Mammary epithelial cell (primary cell): ENCODE measurements at regions of chr6 and their contacts with region 1.

Region 1: GRCh38 chr6:150395398-150396009 is 26.7 kb downstream of the IYD start:
- DNase-seq: peak; percentile 62
- H3K4me3 ChIP-seq: no peak overlapping the region
- H3K27ac ChIP-seq: no peak overlapping the region
- H3K4me1 ChIP-seq: no peaks in the 10 kb centered on the region
- H3K27me3 ChIP-seq: no peaks in the 10 kb centered on the region
- CTCF ChIP-seq: peak; percentile 65 to 81

Region 2: GRCh38 chr6:149925974-149926777 is 469.3 kb before region 1 on chr6:
- CTCF ChIA-PET with region 1: no interaction called
- dilution Hi-C with region 1: no loop called
- in situ Hi-C with region 1: loop called in 1 of 2 experiments (anchors 25 kb)
- intact Hi-C with region 1: no loop called
- DNase-seq: peak; percentile 75
- H3K4me3 ChIP-seq: peak overlapping the region; percentile 14 to 44 (median 35)
- H3K27ac ChIP-seq: no peak overlapping the region
- H3K4me1 ChIP-seq: peaks cover 18% of the 10 kb centered on the region
- H3K27me3 ChIP-seq: no peaks in the 10 kb centered on the region
- CTCF ChIP-seq: peak; percentile 91 to 97

Region 3: GRCh38 chr6:149990618-149991471 is 404.7 kb before region 1 on chr6:
- CTCF ChIA-PET with region 1: interaction called, 13 read pairs
- dilution Hi-C with region 1: no loop called
- in situ Hi-C with region 1: no loop called
- intact Hi-C with region 1: no loop called
- DNase-seq: no peak
- H3K4me3 ChIP-seq: peak overlapping the region; percentile 38 to 42 (median 41)
- H3K27ac ChIP-seq: no peak overlapping the region
- H3K4me1 ChIP-seq: peaks cover 18% of the 10 kb centered on the region
- H3K27me3 ChIP-seq: peaks cover 59% of the 10 kb centered on the region
- CTCF ChIP-seq: no peak

Region 4: DNA sequence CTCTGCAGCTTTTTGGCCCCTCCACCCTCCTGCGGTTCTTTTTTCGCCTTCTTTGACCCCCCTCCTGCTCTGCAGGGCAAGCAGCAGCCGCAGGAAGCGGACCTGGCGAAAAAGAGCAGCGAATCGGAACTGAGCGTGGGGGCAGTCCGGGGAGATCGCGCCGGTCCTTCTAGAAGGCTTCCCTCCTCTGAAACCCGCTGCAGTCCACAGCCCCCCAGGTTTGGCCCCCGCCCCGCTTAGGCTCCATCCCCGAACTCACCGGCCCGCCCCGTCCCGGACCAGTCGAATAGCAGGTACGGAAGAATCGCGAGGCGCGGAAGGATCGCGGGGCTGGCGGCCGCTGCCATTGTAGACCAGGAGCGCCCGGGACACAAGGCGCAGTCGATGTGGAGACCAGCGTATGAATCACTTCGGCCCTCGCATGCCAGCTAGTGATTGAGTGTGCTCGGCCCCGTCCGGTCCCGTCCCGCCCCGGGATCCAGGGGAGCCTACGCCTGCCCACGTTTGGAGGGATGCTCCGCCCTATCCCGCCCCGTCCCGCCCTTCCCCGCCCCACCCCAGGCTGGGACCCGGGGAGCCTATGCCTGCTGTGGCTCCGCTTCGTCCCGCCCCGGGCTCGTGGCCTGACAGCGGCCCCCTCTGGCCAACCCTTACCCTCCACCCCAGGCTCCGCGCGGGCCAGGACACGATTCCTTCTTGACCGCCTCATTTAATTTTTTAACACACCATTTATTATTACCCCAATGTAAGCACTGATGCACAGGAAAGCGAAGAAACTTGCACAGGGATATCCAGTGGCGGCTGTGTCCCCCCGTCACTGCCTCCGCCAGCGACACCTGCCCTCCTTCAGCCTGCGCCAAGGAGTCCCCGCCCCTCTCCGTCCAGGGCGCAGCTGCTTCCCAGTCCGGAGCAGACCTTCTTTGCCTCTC is 326.5 kb before region 1 on chr6 and contains the start of gene ULBP3:
- CTCF ChIA-PET with region 1: interaction called, 3 read pairs
- dilution Hi-C with region 1: no loop called
- in situ Hi-C with region 1: no loop called
- intact Hi-C with region 1: loop called (anchors 1 kb)
- DNase-seq: peak; percentile 98
- H3K4me3 ChIP-seq: peak within 1 kb of the TSS; percentile 63 to 88 (median 82)
- H3K27ac ChIP-seq: peak within 1 kb of the TSS; percentile 61
- H3K4me1 ChIP-seq: peaks cover 37% of the 10 kb centered on the region
- H3K27me3 ChIP-seq: no peaks in the 10 kb centered on the region
- CTCF ChIP-seq: peak; percentile 32 to 64
- total RNA-seq, gene ULBP3: 14.5 to 28.5 TPM

Region 5: GRCh38 chr6:150334790-150335783 is 60.4 kb before region 1 on chr6:
- CTCF ChIA-PET with region 1: interaction called, 3 read pairs
- dilution Hi-C with region 1: no loop called
- in situ Hi-C with region 1: no loop called
- intact Hi-C with region 1: loop called (anchors 1 kb)
- DNase-seq: peak; percentile 67
- H3K4me3 ChIP-seq: no peak overlapping the region
- H3K27ac ChIP-seq: peak overlapping the region; percentile 59
- H3K4me1 ChIP-seq: peaks cover 26% of the 10 kb centered on the region
- H3K27me3 ChIP-seq: no peaks in the 10 kb centered on the region
- CTCF ChIP-seq: peak; percentile 82 to 88

Region 6: DNA sequence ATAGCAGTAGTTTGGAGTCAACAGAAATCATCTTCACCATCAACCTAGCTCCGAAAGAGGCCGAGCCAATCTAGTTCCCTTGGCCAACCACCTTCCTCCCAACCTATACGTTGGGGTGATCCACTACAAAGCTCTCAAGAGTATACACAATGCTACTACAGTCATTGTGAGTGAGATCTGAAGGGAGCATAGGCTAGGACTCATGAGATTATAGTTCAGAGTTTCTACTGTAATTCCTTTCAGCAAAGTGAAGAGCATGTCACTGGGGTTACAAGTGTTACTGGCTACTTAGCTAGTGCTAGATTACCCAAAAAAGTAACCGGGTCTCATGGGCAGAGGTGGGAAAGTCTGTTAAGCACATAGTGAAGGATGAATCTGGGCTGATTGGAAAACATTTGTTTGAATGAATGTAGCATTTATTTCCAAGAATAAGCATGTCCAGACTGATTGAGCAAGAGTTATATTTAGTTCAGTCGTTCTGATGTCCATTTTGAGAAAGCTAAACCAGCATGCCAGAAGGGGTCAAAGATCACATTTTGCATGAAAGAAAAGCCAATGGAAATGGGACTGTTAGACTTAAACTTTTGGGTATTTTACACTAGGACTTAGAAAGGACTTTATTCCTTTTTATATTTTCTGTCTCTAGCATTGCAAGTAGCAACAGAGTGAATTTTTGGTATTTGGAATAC is 1401.5 kb after region 1 on chr6:
- CTCF ChIA-PET with region 1: interaction called, 11 read pairs
- dilution Hi-C with region 1: no loop called
- in situ Hi-C with region 1: no loop called
- intact Hi-C with region 1: no loop called
- DNase-seq: no peak
- H3K4me3 ChIP-seq: no peak overlapping the region
- H3K27ac ChIP-seq: no peak overlapping the region
- H3K4me1 ChIP-seq: no peaks in the 10 kb centered on the region
- H3K27me3 ChIP-seq: no peaks in the 10 kb centered on the region
- CTCF ChIP-seq: no peak